Activated T-helper 1 cell treated with anti-CD3 and anti-CD28 coated beads, Interleukin-12 subunit alpha, Interleukin-12 subunit beta, Interleukin-2, Interleukin-4 antibody, amounts not matched to agents 30 ng/mL and 10 ng/mL and 1 ng/mL, durations not matched to agents 14 hours and 24 hours and 36 hours (primary cell): ENCODE measurements at regions of chr20 and their contacts with region 1.

Region 1: DNA sequence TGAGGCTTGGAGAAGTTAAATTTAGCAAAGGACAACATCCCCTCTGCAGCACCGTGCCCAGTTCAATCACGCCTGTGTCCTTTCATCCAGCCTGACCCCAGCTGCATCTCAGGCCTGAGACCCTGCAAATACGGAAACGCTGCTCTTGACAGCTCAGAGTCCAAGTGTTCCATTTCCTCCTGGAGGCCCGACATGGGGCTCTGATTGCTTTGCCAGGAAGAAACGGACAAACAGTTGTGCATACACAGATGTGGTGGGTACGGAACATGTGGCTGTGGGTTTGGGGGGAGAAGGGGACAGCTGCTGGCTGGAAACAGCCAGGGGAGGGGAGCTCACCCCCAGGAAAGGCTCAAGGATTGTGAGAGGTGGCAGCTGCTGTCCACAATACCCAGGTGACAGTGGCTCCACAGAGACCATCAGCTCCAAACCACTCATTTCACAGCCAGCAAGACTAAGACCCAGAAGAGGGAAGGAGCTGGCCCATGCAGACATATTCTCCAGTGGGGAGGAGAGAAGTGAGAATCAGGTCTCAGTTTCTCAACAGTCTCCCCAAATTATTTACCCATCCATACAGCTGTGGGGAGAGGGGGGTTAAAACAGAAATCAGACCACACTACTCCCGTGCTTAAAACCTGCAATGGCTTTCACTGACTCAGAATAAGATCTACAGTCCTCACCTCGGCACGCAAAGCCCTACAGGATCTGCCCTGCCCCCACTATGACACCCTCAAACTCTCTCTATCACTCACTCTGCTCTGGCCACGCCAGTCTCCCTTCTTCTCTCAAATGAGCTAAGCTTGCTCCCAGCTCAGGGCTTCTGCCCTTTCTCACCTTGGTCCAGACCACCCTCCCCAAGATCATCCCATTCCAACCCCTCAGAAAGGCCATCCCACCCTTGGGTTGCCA is 89.1 kb downstream of the PREX1 start:
- DNase-seq: peak; percentile 69
- H3K4me3 Mint-ChIP-seq: peak overlapping the region; percentile 54
- H3K27ac Mint-ChIP-seq: peak overlapping the region; percentile 95
- H3K4me1 Mint-ChIP-seq: peaks cover 68% of the 10 kb centered on the region
- H3K27me3 Mint-ChIP-seq: no peaks in the 10 kb centered on the region

Region 2: DNA sequence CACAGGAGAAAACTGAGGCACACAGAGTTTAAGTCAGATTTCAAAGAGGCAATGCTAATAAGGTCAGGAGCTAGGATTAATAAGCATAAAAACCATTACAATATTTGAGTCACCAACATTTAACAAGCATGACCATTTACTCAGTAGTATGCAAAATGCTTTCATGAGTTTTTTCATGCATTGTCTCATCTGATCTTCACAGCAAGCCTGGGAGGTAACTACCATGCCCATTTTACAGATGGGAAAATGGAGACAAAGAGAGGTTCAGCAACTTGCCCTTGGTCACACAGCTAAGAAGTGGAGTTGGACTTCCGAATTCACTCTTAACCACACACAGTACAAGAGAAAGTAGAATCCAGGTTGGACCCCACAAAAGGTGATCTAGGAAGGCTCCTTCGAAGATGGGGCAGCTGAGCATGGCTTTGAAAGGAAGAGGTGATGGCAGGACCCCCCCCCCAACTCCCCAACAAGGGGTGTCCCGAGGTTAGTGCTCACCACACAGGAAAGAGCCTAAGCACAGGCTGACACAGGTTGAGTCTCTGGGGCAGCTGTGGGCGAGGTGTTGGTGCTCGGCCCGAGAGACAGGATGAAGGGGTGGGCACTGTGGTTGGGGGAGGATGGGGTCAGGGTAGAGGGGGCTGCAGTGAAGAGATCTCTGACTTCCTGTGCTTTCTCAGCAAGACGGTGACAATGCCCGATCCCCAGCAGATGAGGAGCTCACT is 19.6 kb before region 1 on chr20:
- intact Hi-C with region 1: loop called (anchors 1 kb)
- DNase-seq: peak; percentile 44
- H3K4me3 Mint-ChIP-seq: peak overlapping the region; percentile 5
- H3K27ac Mint-ChIP-seq: peak overlapping the region; percentile 88
- H3K4me1 Mint-ChIP-seq: peaks cover 89% of the 10 kb centered on the region
- H3K27me3 Mint-ChIP-seq: no peaks in the 10 kb centered on the region

Region 3: DNA sequence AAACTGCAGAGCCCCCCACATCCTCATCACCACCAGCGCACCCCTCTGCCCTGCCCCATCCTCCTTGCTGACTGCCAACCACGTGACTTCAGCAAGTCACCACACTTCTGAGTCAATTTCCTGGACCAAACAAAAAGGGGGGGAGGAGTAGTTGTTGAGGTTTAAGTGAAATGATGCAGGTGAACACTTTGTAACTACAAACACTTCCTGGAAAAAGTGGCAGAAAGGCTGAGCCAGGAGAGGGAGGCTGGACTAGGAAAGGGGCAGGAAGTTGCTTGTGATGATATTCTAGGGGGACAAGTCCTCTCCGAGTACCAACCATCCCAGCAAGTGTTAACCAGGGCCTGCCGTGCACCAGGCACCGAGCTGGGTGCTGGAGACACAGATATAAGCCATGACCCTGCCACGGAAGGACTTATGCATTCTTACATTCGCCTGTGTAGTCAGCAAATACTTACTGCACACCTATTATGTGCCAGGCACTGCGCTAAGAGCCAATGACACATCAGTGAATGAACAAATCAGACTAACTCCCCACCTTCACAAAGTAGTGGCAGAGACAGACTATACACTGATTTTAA is 21.8 kb after region 1 on chr20:
- intact Hi-C with region 1: loop called (anchors 1 kb)
- DNase-seq: peak; percentile 75
- H3K4me3 Mint-ChIP-seq: peak overlapping the region; percentile 78
- H3K27ac Mint-ChIP-seq: peak overlapping the region; percentile 96
- H3K4me1 Mint-ChIP-seq: peaks cover 86% of the 10 kb centered on the region
- H3K27me3 Mint-ChIP-seq: no peaks in the 10 kb centered on the region

Region 4: GRCh38 chr20:48846498-48847485 is 108.1 kb after region 1 on chr20:
- intact Hi-C with region 1: loop called (anchors 1 kb)
- DNase-seq: no peak
- H3K4me3 Mint-ChIP-seq: peak overlapping the region; percentile 32
- H3K27ac Mint-ChIP-seq: peak overlapping the region; percentile 98
- H3K4me1 Mint-ChIP-seq: peaks cover 23% of the 10 kb centered on the region
- H3K27me3 Mint-ChIP-seq: peaks cover 18% of the 10 kb centered on the region